ENCODE measurements at regions of chr6 and their contacts with region 1.

Region 1: GRCh38 chr6:106114492-106115265 is 28.5 kb downstream of the PRDM1 start:
- DNase-seq: no peak
- H3K4me3 ChIP-seq: no peak overlapping the region
- H3K27ac ChIP-seq: no peak overlapping the region
- H3K4me1 ChIP-seq: peaks cover 13% of the 10 kb centered on the region
- H3K27me3 ChIP-seq: no peaks in the 10 kb centered on the region
- CTCF ChIP-seq: no peak

Region 2: GRCh38 chr6:105591053-105591452 is 523.6 kb before region 1 on chr6:
- CTCF ChIA-PET with region 1: no interaction called
- POLR2A ChIA-PET with region 1: no interaction called
- intact Hi-C with region 1: loop called (anchors 10 kb)
- DNase-seq: peak in 1 of 2 experiments; percentile 43
- H3K4me3 ChIP-seq: no peak overlapping the region
- H3K27ac ChIP-seq: no peak overlapping the region
- H3K4me1 ChIP-seq: peaks cover 22% of the 10 kb centered on the region
- H3K27me3 ChIP-seq: no peaks in the 10 kb centered on the region
- CTCF ChIP-seq: no peak

Region 3: DNA sequence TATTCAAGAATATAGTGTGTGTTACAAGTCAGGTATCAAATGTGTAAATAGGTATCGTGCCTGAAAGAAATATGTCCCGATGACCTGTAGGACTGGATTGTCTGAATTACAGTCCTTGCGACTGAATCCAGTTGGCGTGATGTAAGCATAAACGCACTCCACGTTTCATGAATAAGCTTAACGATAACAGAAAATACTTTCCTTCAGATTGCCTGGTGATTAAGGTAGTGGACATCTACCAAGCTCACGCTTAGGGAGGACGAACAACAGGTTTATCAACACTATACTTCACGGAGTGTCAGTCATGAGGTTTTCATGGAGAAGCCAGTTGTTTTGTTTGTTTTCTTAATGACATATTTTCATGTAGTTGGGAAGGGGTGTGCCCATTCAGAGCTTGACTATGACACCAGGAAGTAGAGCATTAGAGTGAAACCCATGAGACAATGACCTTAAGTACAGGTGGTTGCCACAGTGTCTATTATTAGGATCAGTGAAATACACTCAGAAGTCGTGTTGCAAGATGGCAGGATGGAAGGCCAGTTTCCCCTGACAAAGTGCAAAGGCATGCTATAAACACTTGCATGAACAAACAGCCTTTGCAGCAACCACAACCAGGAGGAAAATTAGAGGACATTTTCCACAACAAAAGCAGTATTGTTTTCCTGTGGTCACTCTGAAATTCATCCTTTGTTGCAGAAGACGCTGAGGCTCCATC is 334.4 kb before region 1 on chr6:
- CTCF ChIA-PET with region 1: no interaction called
- POLR2A ChIA-PET with region 1: no interaction called
- intact Hi-C with region 1: loop called (anchors 1 kb)
- DNase-seq: peak; percentile 60 to 99
- H3K4me3 ChIP-seq: no peak overlapping the region; the same call in 1 of the 2 replicates
- H3K27ac ChIP-seq: peak overlapping the region; percentile 71
- H3K4me1 ChIP-seq: peaks cover 24% of the 10 kb centered on the region
- H3K27me3 ChIP-seq: no peaks in the 10 kb centered on the region
- CTCF ChIP-seq: no peak

Region 4: DNA sequence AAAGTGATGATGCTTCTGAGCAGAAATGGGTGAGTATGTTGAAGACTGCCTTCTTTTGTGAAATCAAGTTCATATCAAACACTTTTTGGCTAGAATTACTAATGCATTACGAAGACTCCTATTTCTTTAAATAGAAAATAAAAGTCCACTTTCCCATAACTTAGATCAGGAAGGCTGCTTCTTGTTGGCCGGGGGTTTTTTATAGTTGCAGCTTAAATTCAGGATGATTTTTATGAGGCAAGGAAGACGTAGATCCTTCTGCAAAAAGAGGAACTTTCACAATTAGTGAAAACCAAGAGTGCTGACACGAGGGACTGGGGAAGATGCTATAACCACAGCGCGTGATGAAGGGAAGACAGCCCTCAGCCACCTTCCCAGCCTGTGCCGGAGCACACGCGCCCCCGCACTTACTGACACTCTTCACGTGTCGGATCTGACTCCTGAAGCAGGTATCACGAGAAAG is 234.6 kb before region 1 on chr6:
- CTCF ChIA-PET with region 1: no interaction called
- POLR2A ChIA-PET with region 1: no interaction called
- intact Hi-C with region 1: no loop called
- DNase-seq: no peak
- H3K4me3 ChIP-seq: no peak overlapping the region
- H3K27ac ChIP-seq: no peak overlapping the region
- H3K4me1 ChIP-seq: no peaks in the 10 kb centered on the region
- H3K27me3 ChIP-seq: no peaks in the 10 kb centered on the region
- CTCF ChIP-seq: no peak

Region 5: DNA sequence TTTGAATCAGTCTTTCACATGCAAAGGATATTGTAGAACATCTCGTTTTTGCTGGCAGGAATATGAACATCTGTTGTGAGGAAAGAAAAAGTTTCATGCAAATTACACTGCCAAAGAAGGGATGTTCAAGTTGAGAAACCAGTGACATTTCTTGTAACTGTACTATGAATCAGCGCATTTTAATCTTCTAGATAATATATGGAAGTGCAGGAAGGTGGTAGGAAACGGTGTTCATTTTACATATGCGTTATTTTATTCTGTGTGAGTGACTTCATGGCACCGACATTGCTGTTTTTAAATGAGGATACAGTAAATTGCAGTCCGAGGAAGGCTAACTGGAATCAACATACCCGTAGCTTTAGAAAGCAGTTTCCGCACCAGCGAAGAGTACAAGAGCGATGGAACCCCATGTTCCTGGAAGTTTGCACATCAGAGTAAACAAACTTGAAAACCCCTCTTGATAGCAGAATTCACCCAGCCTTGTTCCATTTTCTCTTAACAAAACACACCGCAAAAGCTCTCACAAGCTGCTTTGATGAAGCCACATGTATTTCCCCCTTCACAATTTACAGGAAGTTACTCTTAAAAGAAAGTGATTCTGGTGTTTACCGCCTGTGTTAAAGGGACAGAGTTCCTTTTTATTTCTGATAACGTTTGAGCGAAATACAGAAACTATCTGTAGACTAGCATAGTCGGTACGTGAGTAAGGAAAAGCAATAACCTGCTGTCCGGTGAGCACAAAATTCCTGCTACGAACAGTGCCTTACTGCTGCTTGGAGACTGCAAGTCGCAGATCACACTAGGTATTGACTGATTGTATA is 17.1 kb before region 1 on chr6:
- CTCF ChIA-PET with region 1: no interaction called
- POLR2A ChIA-PET with region 1: interaction called, 3 read pairs
- intact Hi-C with region 1: loop called (anchors 1 kb)
- DNase-seq: no peak
- H3K4me3 ChIP-seq: peak overlapping the region; percentile 60
- H3K27ac ChIP-seq: peak overlapping the region; percentile 50
- H3K4me1 ChIP-seq: peaks cover 40% of the 10 kb centered on the region
- H3K27me3 ChIP-seq: no peaks in the 10 kb centered on the region
- CTCF ChIP-seq: no peak

Region 6: DNA sequence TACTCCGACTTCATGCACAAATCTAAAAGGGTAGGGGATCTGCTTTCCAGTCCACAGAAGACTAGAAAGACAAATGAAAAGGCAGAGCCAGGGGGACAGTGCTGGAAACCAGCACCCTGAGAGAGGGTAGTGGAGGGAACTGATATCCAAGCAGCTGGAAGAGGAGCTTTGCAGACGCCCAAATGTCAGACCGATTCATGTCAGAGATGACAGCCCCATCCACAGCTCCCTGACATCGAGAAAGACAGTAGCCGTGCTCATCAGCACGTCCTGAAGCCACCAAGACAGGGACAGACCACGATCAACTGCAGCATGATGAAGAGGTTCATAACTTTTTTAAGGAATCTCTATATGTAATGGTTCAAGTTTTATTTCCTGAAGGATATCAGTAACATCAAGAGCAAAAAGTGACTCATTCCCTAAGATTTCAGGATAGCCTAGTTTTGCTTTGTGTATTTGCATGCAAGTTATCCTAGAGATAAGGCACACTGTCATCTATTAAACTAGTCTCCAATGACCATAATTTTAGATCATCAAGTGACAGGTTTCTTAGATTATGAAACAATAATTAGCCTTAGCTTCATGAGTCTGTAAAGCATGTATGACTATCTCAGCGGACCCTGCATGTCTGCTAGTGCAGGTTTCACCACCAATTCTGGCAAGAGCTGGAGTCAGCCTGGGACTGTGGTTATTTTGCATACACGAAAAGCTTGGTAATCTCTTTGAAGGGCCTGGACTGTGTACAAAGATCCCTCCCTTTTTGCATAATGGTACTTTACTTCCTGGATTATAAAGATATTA is 14.5 kb after region 1 on chr6:
- CTCF ChIA-PET with region 1: no interaction called
- POLR2A ChIA-PET with region 1: no interaction called
- intact Hi-C with region 1: loop called (anchors 1 kb)
- DNase-seq: peak; percentile 60 to 98
- H3K4me3 ChIP-seq: peak overlapping the region; percentile 32; the same call in 1 of the 2 replicates
- H3K27ac ChIP-seq: peak overlapping the region; percentile 84
- H3K4me1 ChIP-seq: peaks cover 34% of the 10 kb centered on the region
- H3K27me3 ChIP-seq: no peaks in the 10 kb centered on the region
- CTCF ChIP-seq: no peak

Region 7: DNA sequence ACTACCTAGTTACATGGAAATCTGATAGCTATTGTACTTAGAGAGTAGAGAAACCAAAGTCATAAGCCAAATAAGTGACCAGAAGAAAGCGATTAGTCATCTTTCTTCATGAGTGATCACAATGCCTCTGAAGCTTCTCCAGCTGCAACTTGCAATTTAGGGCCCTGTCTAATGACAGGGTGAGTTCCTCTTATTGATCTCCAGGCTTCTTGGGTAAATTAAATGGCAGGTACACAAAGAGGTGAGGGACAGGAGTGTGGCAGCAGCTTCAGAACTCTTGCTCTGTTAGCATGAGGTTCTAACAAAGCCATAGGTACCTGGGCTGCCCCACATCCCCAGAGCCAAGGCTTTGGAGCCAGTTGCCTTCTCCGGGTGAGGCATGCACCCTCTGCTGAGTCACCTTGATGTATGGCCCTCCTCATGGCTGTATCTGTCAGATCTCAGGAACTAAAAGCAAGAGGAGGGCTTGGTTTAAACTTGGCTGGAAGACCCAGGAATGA is 32.2 kb after region 1 on chr6:
- CTCF ChIA-PET with region 1: no interaction called
- POLR2A ChIA-PET with region 1: interaction called, 3 read pairs
- intact Hi-C with region 1: loop called (anchors 1 kb)
- DNase-seq: peak; percentile 21 to 87
- H3K4me3 ChIP-seq: no peak overlapping the region
- H3K27ac ChIP-seq: peak overlapping the region; percentile 55
- H3K4me1 ChIP-seq: peaks cover 45% of the 10 kb centered on the region
- H3K27me3 ChIP-seq: no peaks in the 10 kb centered on the region
- CTCF ChIP-seq: no peak

Region 8: GRCh38 chr6:106194949-106195921 is 80.6 kb after region 1 on chr6:
- CTCF ChIA-PET with region 1: no interaction called
- POLR2A ChIA-PET with region 1: no interaction called
- intact Hi-C with region 1: loop called (anchors 1 kb)
- DNase-seq: peak; percentile 4 to 94
- H3K4me3 ChIP-seq: 0 out of 2 replicates have a peak overlapping the region, but pooled peaks have one; percentile 10
- H3K27ac ChIP-seq: peak overlapping the region; percentile 92
- H3K4me1 ChIP-seq: peaks cover 25% of the 10 kb centered on the region
- H3K27me3 ChIP-seq: no peaks in the 10 kb centered on the region
- CTCF ChIP-seq: no peak